GM12878 (cell line): ENCODE measurements at regions of chr18 and their contacts with region 1.

Region 1: DNA sequence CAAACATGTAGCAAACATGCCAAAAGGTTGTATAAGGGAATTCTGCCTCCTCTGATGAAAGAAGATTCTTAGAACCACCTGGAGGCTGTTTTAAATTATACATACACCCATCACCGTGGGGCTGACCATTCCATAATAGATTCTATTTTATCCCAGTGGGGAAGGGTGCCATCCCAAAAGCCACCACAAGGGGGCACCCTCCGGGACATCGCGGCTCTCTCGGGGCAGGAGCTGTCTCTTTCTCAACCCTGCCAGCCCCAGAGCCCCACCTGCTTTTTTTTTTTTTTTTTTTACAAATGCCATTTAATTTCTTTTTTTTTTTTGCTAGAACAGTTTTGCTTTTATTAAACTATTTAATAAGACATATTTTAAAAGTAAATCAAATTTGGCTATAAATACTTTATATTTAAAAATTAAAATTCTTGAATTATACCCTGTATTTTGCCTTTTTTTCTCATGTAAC is 8.6 kb upstream of the MTCL1 start:
- DNase-seq: no peak
- ATAC-seq: peak; percentile 95
- H3K4me3 ChIP-seq: no peak overlapping the region
- H3K27ac ChIP-seq: no peak overlapping the region
- H3K4me1 ChIP-seq: peaks cover 7% of the 10 kb centered on the region; the same call in 1 of the 2 replicates
- H3K27me3 ChIP-seq: peaks cover 0 to 3% of the 10 kb centered on the region in 2 experiments; a peak in 3 of 4 replicates
- CTCF ChIP-seq: peak; percentile 69 to 85 (median 82)
- EP300 ChIP-seq: no peak
- POLR2A ChIP-seq: no peak
- RAD21 ChIP-seq: peak; percentile 69

Region 2: GRCh38 chr18:8654503-8655451 is 42.0 kb before region 1 on chr18:
- CTCF ChIA-PET with region 1: interaction called, 14 read pairs
- POLR2A ChIA-PET with region 1: no interaction called
- RAD21 ChIA-PET with region 1: no interaction called
- SMC1A ChIA-PET with region 1: interaction called, 10 read pairs
- in situ Hi-C with region 1: no loop called
- intact Hi-C with region 1: loop called (anchors 5 kb)
- DNase-seq: no peak
- ATAC-seq: peak; percentile 47; the same call in 1 of the 3 replicates
- H3K4me3 ChIP-seq: no peak overlapping the region
- H3K27ac ChIP-seq: no peak overlapping the region
- H3K4me1 ChIP-seq: no peaks in the 10 kb centered on the region
- H3K27me3 ChIP-seq: no peaks in the 10 kb centered on the region; a peak in 1 of 4 replicates
- CTCF ChIP-seq: peak; percentile 51 to 71 (median 70); a peak in 5 of 6 replicates
- EP300 ChIP-seq: no peak
- POLR2A ChIP-seq: no peak
- RAD21 ChIP-seq: peak; percentile 81

Region 3: GRCh38 chr18:8673256-8674209 is 23.2 kb before region 1 on chr18:
- CTCF ChIA-PET with region 1: interaction called, 15 read pairs
- POLR2A ChIA-PET with region 1: no interaction called
- RAD21 ChIA-PET with region 1: no interaction called
- SMC1A ChIA-PET with region 1: no interaction called
- in situ Hi-C with region 1: no loop called
- intact Hi-C with region 1: no loop called
- DNase-seq: peak; percentile 52
- ATAC-seq: peak; percentile 74
- H3K4me3 ChIP-seq: no peak overlapping the region
- H3K27ac ChIP-seq: no peak overlapping the region
- H3K4me1 ChIP-seq: peaks cover 8% of the 10 kb centered on the region; the same call in 1 of the 2 replicates
- H3K27me3 ChIP-seq: no peaks in the 10 kb centered on the region
- CTCF ChIP-seq: no peak
- EP300 ChIP-seq: no peak
- POLR2A ChIP-seq: no peak
- RAD21 ChIP-seq: no peak

Region 4: GRCh38 chr18:8754995-8755955 is 58.5 kb after region 1 on chr18:
- CTCF ChIA-PET with region 1: no interaction called
- POLR2A ChIA-PET with region 1: no interaction called
- RAD21 ChIA-PET with region 1: no interaction called
- SMC1A ChIA-PET with region 1: no interaction called
- in situ Hi-C with region 1: no loop called
- intact Hi-C with region 1: no loop called
- DNase-seq: peak; percentile 7
- ATAC-seq: no peak
- H3K4me3 ChIP-seq: no peak overlapping the region
- H3K27ac ChIP-seq: no peak overlapping the region
- H3K4me1 ChIP-seq: peaks cover 5% of the 10 kb centered on the region; the same call in 1 of the 2 replicates
- H3K27me3 ChIP-seq: no peaks in the 10 kb centered on the region; a peak in 1 of 4 replicates
- CTCF ChIP-seq: no peak
- EP300 ChIP-seq: no peak
- POLR2A ChIP-seq: no peak
- RAD21 ChIP-seq: no peak

Region 5: DNA sequence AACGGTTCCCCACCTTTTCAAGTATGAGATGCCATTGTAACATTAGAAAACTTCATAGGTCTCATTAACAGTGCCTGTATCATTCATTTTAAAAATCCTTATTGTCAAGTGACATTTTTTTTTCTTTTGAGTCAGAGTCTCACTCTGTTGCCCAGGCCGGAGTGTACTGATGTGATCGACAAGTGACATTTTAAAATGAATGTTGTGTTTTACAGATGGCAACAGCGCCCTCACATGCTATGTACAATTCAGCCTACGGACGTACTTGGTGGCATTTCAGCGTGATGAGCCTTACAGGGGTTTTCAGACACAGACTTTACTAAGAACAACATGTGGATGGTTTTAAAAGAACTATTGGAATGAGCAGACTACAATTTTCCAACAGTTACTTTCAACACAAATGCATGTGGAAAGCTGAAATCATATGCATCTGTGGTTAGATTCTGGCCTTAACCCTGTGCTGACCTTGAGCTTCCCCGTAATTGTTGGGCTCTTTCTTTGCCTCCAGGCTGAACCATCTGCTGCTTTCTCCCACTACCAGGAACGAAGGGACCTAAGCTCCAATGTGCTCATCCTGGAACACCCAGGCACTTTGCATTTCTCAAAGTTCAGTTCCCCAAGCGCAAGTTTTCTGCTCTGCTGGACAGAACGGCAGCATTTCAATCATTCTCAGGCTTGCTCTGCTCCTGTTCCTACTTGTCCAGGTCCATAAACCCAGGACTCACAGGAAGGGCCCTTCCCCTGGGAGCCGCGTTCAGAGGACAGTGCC is 285.8 kb after region 1 on chr18:
- CTCF ChIA-PET with region 1: interaction called, 56 read pairs
- POLR2A ChIA-PET with region 1: no interaction called
- RAD21 ChIA-PET with region 1: interaction called, 13 read pairs
- SMC1A ChIA-PET with region 1: interaction called, 16 read pairs
- in situ Hi-C with region 1: loop called (anchors 5 kb)
- intact Hi-C with region 1: no loop called
- DNase-seq: no peak
- ATAC-seq: peak; percentile 72
- H3K4me3 ChIP-seq: no peak overlapping the region
- H3K27ac ChIP-seq: no peak overlapping the region
- H3K4me1 ChIP-seq: no peaks in the 10 kb centered on the region
- H3K27me3 ChIP-seq: no peaks in the 10 kb centered on the region
- CTCF ChIP-seq: peak; percentile 21 to 66 (median 42); a peak in 4 of 6 replicates
- EP300 ChIP-seq: no peak
- POLR2A ChIP-seq: no peak
- RAD21 ChIP-seq: peak; percentile 75